ENCODE measurements at regions of chr2 and their contacts with region 1.

Region 1: DNA sequence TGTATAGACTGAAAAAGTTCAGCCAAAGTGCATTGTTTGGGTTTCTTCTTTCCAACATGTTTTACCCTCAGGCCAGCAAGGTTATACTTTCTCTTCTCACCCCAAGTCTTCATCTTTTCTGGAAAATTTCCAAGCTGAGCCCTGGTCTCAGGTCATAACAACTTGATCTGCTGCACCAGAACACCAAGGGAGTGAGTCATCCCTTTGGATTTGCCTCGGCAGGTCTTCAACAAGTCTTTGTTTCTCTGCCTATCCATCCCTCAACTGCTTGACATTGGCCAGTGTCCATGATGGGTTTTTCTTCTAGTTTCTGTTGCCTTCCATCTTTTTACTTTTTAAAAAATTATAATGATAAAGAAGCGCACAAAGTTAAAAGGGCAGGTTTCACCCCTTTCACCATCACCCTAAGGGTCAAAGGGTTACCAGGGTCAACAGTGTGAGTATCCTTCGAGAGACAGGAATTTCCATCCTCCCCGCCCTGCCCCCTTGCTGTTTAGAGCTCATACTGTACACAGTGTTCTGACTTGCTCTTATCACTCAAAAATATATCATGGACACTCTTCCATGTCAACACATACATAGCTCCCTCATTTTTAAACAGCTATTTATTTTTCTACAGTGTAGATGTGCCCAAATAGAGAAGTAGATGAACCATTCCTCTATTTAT is 5.7 kb upstream of the SPATS2L start:
- DNase-seq: peak; percentile 59
- H3K4me3 Mint-ChIP-seq: no peak overlapping the region
- H3K27ac Mint-ChIP-seq: peak overlapping the region; percentile 92
- H3K4me1 Mint-ChIP-seq: peaks cover 94% of the 10 kb centered on the region
- H3K27me3 Mint-ChIP-seq: no peaks in the 10 kb centered on the region
- CTCF ChIP-seq: no peak

Region 2: DNA sequence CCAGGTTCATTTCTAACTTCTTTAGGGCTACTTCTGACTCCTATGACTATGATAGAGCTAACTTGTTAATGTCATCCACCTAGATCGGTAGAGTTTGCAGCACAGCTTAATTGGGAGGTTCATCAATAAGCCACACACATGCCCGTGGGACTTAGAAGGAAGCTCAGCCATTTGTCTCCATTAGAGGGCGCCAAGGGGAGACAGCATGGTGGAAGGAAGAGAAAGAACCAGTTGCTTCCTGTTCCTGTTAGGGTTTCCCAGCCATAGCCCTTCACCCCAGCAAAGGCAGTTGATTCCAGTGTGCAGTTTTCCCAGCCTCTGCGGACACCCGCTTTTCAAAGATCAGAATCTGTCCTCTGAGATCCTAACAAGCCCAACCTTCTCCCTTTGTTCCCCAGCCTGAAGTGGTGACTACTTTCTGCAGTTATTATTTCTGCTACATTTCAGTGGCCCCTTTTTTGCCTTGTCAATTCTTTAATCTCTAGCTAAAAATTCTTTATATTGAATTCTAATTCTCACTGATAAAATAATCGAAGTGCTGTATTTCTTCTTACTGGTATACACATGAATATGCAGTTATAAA is 315.1 kb before region 1 on chr2:
- CTCF ChIA-PET with region 1: interaction called, 3 read pairs
- intact Hi-C with region 1: loop called (anchors 1 kb)
- DNase-seq: peak; percentile 81
- H3K4me3 Mint-ChIP-seq: no peak overlapping the region
- H3K27ac Mint-ChIP-seq: no peak overlapping the region
- H3K4me1 Mint-ChIP-seq: peaks cover 18% of the 10 kb centered on the region
- H3K27me3 Mint-ChIP-seq: no peaks in the 10 kb centered on the region
- CTCF ChIP-seq: peak; percentile 72

Region 3: GRCh38 chr2:200054681-200055468 is 245.9 kb before region 1 on chr2:
- CTCF ChIA-PET with region 1: no interaction called
- intact Hi-C with region 1: loop called (anchors 5 kb)
- DNase-seq: no peak
- H3K4me3 Mint-ChIP-seq: no peak overlapping the region
- H3K27ac Mint-ChIP-seq: no peak overlapping the region
- H3K4me1 Mint-ChIP-seq: peaks cover 31% of the 10 kb centered on the region
- H3K27me3 Mint-ChIP-seq: no peaks in the 10 kb centered on the region
- CTCF ChIP-seq: no peak

Region 4: DNA sequence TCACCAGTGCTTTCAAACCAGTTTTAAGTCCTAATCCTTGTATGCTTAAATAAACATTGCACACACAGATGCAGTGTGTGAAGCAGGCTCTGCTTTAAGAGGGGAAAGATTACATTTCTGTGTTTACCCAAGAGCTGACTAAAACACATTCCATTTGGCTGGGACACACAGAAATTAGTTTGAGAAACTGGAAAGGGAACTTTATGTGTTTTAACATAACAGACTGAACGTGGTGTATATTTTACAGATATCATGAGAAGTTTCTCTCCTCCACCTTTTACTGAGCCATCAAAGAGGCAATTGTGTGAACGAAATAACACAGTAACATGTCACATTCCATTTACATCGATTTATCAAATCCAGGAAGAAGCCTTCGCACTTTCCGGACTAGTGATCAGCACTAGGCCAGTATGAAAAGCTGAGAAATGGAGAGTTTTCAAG is 223.6 kb before region 1 on chr2:
- CTCF ChIA-PET with region 1: no interaction called
- intact Hi-C with region 1: loop called (anchors 1 kb)
- DNase-seq: peak; percentile 43
- H3K4me3 Mint-ChIP-seq: no peak overlapping the region
- H3K27ac Mint-ChIP-seq: peak overlapping the region; percentile 90
- H3K4me1 Mint-ChIP-seq: peaks cover 35% of the 10 kb centered on the region
- H3K27me3 Mint-ChIP-seq: no peaks in the 10 kb centered on the region
- CTCF ChIP-seq: no peak

Region 5: GRCh38 chr2:200156166-200156835 is 144.5 kb before region 1 on chr2:
- CTCF ChIA-PET with region 1: interaction called, 3 read pairs
- intact Hi-C with region 1: loop called (anchors 5 kb)
- DNase-seq: peak; percentile 59
- H3K4me3 Mint-ChIP-seq: peak overlapping the region; percentile 51
- H3K27ac Mint-ChIP-seq: peak overlapping the region; percentile 50
- H3K4me1 Mint-ChIP-seq: peaks cover 34% of the 10 kb centered on the region
- H3K27me3 Mint-ChIP-seq: no peaks in the 10 kb centered on the region
- CTCF ChIP-seq: no peak

Region 6: GRCh38 chr2:200259577-200260008 is 41.2 kb before region 1 on chr2:
- CTCF ChIA-PET with region 1: interaction called, 3 read pairs
- intact Hi-C with region 1: loop called (anchors 5 kb)
- DNase-seq: peak; percentile 54
- H3K4me3 Mint-ChIP-seq: peak overlapping the region; percentile 36
- H3K27ac Mint-ChIP-seq: peak overlapping the region; percentile 37
- H3K4me1 Mint-ChIP-seq: peaks cover 40% of the 10 kb centered on the region
- H3K27me3 Mint-ChIP-seq: no peaks in the 10 kb centered on the region
- CTCF ChIP-seq: no peak

Region 7: DNA sequence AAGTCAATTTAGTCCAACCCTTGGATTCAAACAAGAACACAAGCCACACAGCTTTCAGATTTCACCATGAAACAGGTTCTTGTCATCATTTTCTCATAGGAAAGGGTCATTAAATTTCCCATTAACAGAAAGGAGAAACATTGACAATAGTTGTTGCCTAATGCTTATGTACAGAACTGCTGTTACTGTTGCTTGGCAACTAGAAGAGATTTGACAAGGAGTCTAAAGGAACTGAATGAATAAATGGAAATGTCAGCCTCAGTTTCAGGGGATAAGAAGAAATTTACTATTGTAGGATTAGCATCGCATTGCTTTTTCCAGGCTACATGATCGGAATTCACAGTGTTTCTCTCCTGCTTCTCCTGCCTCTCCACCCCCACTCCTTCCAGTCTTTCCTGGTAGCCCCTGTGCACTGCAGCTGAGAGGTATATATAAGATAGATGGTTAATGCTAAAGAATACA is 96.0 kb after region 1 on chr2:
- CTCF ChIA-PET with region 1: no interaction called
- intact Hi-C with region 1: no loop called
- DNase-seq: no peak
- H3K4me3 Mint-ChIP-seq: peak overlapping the region; percentile 56
- H3K27ac Mint-ChIP-seq: peak overlapping the region; percentile 95
- H3K4me1 Mint-ChIP-seq: peaks cover 61% of the 10 kb centered on the region
- H3K27me3 Mint-ChIP-seq: no peaks in the 10 kb centered on the region
- CTCF ChIP-seq: no peak